ENCODE measurements at regions of chr2 and their contacts with region 1.

Region 1: GRCh38 chr2:70994756-70995729 is at the start of gene TEX261:
- DNase-seq: peak; percentile 94
- ATAC-seq: peak; percentile 97
- H3K4me3 Mint-ChIP-seq: peak within 1 kb of the TSS; percentile 98
- H3K27ac Mint-ChIP-seq: peak within 1 kb of the TSS; percentile 93
- H3K4me1 Mint-ChIP-seq: peaks cover 29% of the 10 kb centered on the region
- H3K27me3 Mint-ChIP-seq: no peaks in the 10 kb centered on the region
- total RNA-seq, gene TEX261: 39.1 to 48.5 TPM

Region 2: GRCh38 chr2:70964596-70965386 is 30.3 kb before region 1 on chr2:
- CTCF ChIA-PET with region 1: interaction called, 44 read pairs
- POLR2A ChIA-PET with region 1: no interaction called
- intact Hi-C with region 1: loop called (anchors 1 kb)
- DNase-seq: peak; percentile 91
- ATAC-seq: peak; percentile 98
- H3K4me3 Mint-ChIP-seq: peak overlapping the region; percentile 77
- H3K27ac Mint-ChIP-seq: no peak overlapping the region
- H3K4me1 Mint-ChIP-seq: peaks cover 4% of the 10 kb centered on the region
- H3K27me3 Mint-ChIP-seq: peaks cover 16% of the 10 kb centered on the region

Region 3: DNA sequence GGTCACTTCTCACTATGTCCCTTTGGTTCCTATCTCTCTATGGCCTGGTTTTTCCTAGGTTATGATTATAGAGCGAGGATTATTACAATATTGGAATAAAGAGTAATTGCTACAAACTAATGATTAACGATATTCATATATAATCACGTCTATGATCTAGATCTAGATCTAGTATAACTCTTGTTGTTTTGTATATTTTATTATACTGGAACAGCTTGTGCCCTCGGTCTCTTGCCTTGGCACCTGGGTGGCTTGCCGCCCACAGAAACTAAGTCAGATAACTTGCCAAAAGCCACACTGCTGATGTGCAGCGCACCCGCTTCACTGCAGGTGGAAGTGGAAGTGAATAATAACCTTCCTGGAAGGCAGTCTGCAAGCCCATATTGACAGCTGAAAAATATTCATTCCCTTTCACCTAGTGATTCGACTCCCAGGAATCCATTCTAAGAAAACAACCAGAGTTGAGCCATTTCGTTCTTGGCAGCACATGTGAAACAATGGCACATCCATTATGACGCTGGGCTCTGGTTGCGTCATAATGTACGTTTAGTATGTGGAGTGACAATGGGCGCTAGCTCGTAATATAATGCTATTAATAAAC is 17.3 kb before region 1 on chr2:
- CTCF ChIA-PET with region 1: interaction called, 4 read pairs
- POLR2A ChIA-PET with region 1: interaction called, 3 read pairs
- intact Hi-C with region 1: loop called (anchors 1 to 2 kb)
- DNase-seq: peak; percentile 60
- ATAC-seq: peak; percentile 56
- H3K4me3 Mint-ChIP-seq: peak overlapping the region; percentile 54
- H3K27ac Mint-ChIP-seq: peak overlapping the region; percentile 60
- H3K4me1 Mint-ChIP-seq: peaks cover 17% of the 10 kb centered on the region
- H3K27me3 Mint-ChIP-seq: no peaks in the 10 kb centered on the region

Region 4: DNA sequence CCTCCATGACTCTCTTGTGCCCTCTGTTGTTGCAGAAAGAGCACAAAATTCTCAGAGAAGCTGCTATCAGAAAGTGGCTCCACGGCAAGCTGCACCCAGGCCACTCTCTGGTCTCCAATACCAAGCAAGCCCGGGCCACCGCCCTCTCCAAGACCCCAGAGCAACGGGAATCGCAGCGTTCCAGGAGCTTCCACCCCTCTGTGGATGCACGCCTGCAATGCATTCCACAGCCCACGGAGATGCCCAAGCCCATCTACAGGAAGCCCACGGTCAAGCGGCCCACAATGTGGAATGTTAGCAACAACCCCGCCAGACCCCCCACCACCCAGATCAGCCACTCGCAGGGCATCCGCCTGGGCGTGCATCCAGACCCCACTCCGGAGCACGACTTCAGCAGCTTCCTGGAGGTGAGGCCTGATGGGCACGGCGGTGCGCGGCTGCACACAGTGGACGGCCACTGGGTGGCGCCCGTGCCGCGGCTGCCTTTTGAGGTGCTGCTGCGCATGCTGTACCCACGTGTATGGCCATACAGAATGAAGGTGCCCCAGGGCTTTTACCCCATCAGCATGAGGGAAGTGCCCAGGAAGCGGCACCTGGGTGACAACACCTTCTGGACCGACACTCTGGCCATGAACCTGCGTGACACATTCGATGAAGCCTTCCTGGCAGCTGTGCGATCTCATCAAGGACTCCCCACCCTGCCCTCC is 10.3 kb before region 1 on chr2:
- CTCF ChIA-PET with region 1: interaction called, 23 read pairs
- POLR2A ChIA-PET with region 1: interaction called, 4 read pairs
- intact Hi-C with region 1: loop called (anchors 1 kb)
- DNase-seq: peak; percentile 92
- ATAC-seq: peak; percentile 100
- H3K4me3 Mint-ChIP-seq: no peak overlapping the region
- H3K27ac Mint-ChIP-seq: no peak overlapping the region
- H3K4me1 Mint-ChIP-seq: peaks cover 12% of the 10 kb centered on the region
- H3K27me3 Mint-ChIP-seq: no peaks in the 10 kb centered on the region

Region 5: DNA sequence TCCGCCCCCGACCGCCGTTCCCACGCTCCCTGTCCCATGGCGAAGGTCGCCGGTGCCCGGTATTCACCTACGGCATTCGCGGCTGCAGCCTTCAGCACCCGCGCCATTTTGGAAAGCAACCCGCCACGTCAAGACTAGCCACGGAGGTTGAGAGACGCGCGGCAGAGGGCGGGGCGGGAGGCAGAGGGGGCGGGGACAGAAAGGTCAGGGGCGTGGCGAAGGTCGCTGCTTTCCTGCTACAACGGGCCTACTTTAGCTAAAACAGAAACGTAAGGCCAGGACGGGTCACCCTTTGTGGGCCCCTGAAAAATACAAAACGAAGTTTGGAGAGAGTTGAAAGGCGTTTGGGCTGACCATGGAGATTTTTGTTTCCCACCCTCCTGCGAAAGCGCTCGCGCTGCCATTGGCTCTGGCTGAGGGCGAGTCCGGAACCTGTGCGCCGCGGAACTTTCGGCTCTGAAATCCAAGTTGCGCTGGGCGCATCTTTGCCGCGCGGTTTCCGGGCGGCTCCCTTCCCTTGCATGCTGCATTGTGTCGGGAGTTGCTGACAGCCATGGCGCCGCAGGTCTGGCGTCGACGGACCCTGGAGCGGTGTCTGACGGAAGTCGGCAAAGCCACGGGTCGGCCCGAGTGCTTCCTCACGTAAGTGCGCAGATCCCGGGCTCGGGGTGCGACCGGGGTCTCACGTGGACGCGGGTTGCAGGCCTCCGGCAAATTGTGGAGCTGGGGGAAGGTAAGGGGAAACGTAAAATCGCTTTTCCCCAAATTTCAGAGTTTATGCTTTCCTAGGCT is 135.3 kb after region 1 on chr2 and contains the starts of genes MCEE and MPHOSPH10:
- CTCF ChIA-PET with region 1: no interaction called
- POLR2A ChIA-PET with region 1: no interaction called
- intact Hi-C with region 1: loop called in 1 of 2 experiments (anchors 1 kb)
- DNase-seq: peak; percentile 95
- ATAC-seq: peak; percentile 95
- H3K4me3 Mint-ChIP-seq: no peak within 1 kb of the TSS
- H3K27ac Mint-ChIP-seq: no peak within 1 kb of the TSS
- H3K4me1 Mint-ChIP-seq: peaks cover 18% of the 10 kb centered on the region
- H3K27me3 Mint-ChIP-seq: no peaks in the 10 kb centered on the region
- total RNA-seq, gene MCEE: 10.2 to 13.6 TPM
- total RNA-seq, gene MPHOSPH10: 48.5 to 61.9 TPM

Region 6: DNA sequence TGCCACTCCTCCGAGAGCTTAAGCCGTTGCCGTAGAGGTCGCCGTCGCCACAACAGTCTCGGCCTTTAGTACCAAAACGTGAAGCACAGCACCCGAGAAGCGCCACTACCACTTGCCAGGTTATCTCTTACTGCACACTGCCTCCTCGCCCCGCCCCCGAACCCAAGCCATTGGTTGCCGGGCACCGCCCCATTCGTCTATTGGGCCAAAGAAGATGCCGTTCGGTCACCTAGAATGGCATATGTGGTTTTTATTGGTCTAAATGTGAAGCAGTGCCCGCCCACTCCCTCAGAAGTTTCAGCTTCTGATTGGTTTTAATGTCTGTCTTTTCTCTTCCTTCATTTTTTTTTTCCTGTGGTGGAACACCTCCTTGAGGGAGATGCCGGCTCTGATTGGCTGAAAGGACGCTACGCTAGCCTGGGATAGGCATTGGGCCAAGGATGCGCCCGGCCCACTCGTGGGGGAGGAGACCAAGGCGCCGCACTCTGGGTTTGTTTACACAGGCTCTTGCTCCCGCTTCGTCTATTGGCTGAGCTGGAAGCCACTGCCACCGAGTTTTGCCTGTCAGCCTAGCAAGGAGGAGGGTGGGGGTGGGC is 232.0 kb after region 1 on chr2 and contains the start of gene PAIP2B:
- CTCF ChIA-PET with region 1: no interaction called
- POLR2A ChIA-PET with region 1: no interaction called
- intact Hi-C with region 1: loop called (anchors 1 kb)
- DNase-seq: peak; percentile 99
- ATAC-seq: peak; percentile 97
- H3K4me3 Mint-ChIP-seq: peak within 1 kb of the TSS; percentile 94
- H3K27ac Mint-ChIP-seq: peak within 1 kb of the TSS; percentile 85
- H3K4me1 Mint-ChIP-seq: peaks cover 15% of the 10 kb centered on the region
- H3K27me3 Mint-ChIP-seq: peaks cover 5% of the 10 kb centered on the region
- total RNA-seq, gene PAIP2B: 2.3 to 3.0 TPM

Region 7: GRCh38 chr2:72825241-72826155 is 1830.5 kb after region 1 on chr2 and contains the start of gene EXOC6B:
- CTCF ChIA-PET with region 1: no interaction called
- POLR2A ChIA-PET with region 1: no interaction called
- intact Hi-C with region 1: loop called in 1 of 2 experiments (anchors 10 kb)
- DNase-seq: peak; percentile 91
- ATAC-seq: peak; percentile 80
- H3K4me3 Mint-ChIP-seq: peak within 1 kb of the TSS; percentile 93
- H3K27ac Mint-ChIP-seq: peak within 1 kb of the TSS; percentile 75
- H3K4me1 Mint-ChIP-seq: peaks cover 40% of the 10 kb centered on the region
- H3K27me3 Mint-ChIP-seq: peaks cover 2% of the 10 kb centered on the region
- total RNA-seq, gene EXOC6B: 7.0 to 9.0 TPM